ENCODE measurements at regions of chr6 and their contacts with region 1.

Region 1: DNA sequence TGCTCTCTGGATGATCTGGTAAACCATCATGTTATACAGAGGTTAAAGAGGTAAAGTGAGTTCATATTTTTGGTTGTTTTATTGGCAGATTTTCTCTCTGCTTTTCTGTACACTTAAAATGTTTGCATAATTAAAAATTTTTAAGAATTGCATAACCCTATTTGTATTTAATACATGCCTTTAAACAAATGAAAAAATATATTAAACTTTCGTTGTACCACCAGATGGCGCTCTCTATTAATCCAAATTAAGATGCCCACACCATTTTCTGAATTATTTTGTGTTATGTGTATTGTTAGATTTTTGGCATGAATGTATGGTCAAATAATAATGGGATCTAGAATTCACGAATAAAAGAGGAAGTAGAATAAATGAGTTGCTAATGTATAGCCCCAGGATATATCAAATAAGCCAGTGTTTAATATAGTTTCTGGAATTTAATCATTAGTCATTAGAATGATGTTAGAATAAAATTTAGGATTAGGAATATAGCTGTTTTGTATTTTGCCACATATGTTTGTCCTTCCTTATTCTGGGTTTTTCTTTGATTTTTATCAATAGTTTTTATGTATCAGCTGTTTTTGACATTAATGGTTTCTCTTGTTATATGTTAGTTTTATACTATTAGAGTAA is 38.9 kb downstream of the SMAP1 start:
- DNase-seq: peak in 1 of 2 donors; percentile 74
- ATAC-seq: peak in 1 of 3 donors; percentile 39
- H3K4me3 ChIP-seq: no peak overlapping the region
- H3K4me3 Mint-ChIP-seq: no peak overlapping the region
- H3K27ac ChIP-seq: no peak overlapping the region
- H3K27ac Mint-ChIP-seq: no peak overlapping the region
- H3K4me1 ChIP-seq: no peaks in the 10 kb centered on the region
- H3K4me1 Mint-ChIP-seq: peaks cover 42 to 54% of the 10 kb centered on the region in 2 donors
- H3K27me3 ChIP-seq: no peaks in the 10 kb centered on the region
- H3K27me3 Mint-ChIP-seq: no peaks in the 10 kb centered on the region
- CTCF ChIP-seq: peak; percentile 86

Region 2: DNA sequence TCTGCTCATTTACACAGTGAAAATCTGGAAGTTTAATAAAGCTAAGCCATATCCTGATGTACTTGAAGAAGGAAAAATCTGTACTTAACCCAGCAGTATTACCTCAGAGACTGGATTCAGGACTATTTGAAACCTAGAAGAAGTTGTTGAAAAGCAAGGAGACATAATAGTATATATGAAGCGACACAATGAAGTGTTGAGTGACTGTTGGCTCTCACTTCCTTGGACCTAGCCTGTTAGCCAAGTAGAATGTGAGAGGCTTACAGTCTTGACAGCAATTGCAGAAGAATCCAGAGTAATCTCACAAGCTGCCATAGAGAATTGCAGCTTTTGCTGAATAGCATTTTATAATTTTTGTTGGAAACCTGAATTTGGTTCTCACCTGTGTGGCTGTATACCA is 12.2 kb before region 1 on chr6:
- intact Hi-C with region 1: no loop called
- DNase-seq: no peak
- ATAC-seq: no peak
- H3K4me3 ChIP-seq: no peak overlapping the region
- H3K4me3 Mint-ChIP-seq: no peak overlapping the region
- H3K27ac ChIP-seq: no peak overlapping the region
- H3K27ac Mint-ChIP-seq: no peak overlapping the region
- H3K4me1 ChIP-seq: peaks cover 3% of the 10 kb centered on the region
- H3K4me1 Mint-ChIP-seq: peaks cover 87 to 88% of the 10 kb centered on the region in 2 donors
- H3K27me3 ChIP-seq: no peaks in the 10 kb centered on the region
- H3K27me3 Mint-ChIP-seq: no peaks in the 10 kb centered on the region
- CTCF ChIP-seq: no peak

Region 3: DNA sequence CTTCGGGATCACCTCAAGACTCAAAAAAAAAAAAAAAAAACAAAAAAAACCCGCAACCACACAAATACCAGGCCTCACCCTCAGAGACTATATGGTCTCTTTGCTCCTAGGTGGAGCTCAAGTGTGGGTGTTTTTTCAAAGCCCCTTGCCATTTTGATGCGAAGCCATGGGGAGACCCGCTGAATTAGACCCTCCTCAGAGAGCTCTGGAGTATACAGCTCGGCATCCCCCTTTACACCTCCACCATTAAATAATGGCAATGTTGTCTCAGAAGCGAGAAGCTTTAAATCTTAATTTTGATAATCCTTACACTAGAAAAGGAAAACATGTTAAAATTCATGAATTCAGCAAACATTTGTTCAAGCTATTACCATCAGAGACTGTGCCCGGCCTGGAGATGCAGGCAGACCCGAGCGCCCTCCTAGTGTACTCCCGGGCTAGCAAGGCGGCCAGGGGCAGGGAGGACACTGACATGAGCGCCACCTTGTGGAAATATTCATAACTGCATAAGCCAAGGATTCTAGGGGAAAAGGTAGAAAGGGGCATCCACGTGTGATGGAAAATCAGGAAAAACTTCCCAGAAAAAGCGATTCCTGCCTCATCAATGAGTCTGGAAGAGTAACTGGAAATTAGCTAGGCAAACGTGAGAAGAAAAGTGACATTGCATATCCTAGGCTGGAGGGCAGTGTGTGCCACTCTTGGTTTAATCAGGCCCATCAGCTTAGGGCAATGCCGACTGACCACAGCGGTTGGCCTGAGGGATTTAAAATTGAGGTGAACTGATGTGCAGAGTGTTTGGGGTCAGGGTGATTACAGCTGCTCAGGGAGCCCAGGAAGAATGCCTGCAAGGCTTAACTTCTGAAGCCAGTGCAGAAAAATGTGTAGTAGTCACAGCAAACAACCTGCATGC is 177.7 kb after region 1 on chr6:
- intact Hi-C with region 1: loop called (anchors 1 kb)
- DNase-seq: peak; percentile 32 to 76
- ATAC-seq: peak; percentile 75 to 92 (median 87)
- H3K4me3 ChIP-seq: no peak overlapping the region
- H3K4me3 Mint-ChIP-seq: no peak overlapping the region
- H3K27ac ChIP-seq: no peak overlapping the region
- H3K27ac Mint-ChIP-seq: no peak overlapping the region
- H3K4me1 ChIP-seq: no peaks in the 10 kb centered on the region
- H3K4me1 Mint-ChIP-seq: no peaks in the 10 kb centered on the region
- H3K27me3 ChIP-seq: no peaks in the 10 kb centered on the region
- H3K27me3 Mint-ChIP-seq: peaks cover 16 to 32% of the 10 kb centered on the region in 2 donors
- CTCF ChIP-seq: peak; percentile 86

Region 4: GRCh38 chr6:70905742-70906141 is 199.1 kb after region 1 on chr6:
- intact Hi-C with region 1: no loop called
- DNase-seq: no peak
- ATAC-seq: no peak
- H3K4me3 ChIP-seq: no peak overlapping the region
- H3K4me3 Mint-ChIP-seq: no peak overlapping the region
- H3K27ac ChIP-seq: no peak overlapping the region
- H3K27ac Mint-ChIP-seq: no peak overlapping the region
- H3K4me1 ChIP-seq: no peaks in the 10 kb centered on the region
- H3K4me1 Mint-ChIP-seq: no peaks in the 10 kb centered on the region
- H3K27me3 ChIP-seq: no peaks in the 10 kb centered on the region
- H3K27me3 Mint-ChIP-seq: peaks cover 0 to 21% of the 10 kb centered on the region in 2 donors
- CTCF ChIP-seq: no peak

Region 5: GRCh38 chr6:70955441-70956190 is 249.0 kb after region 1 on chr6:
- intact Hi-C with region 1: loop called (anchors 5 kb)
- DNase-seq: peak; percentile 71 to 90
- ATAC-seq: peak; percentile 88 to 96 (median 94)
- H3K4me3 ChIP-seq: peak overlapping the region; percentile 13
- H3K4me3 Mint-ChIP-seq: peak overlapping the region; percentile 87
- H3K27ac ChIP-seq: no peak overlapping the region
- H3K27ac Mint-ChIP-seq: no peak overlapping the region
- H3K4me1 ChIP-seq: peaks cover 21% of the 10 kb centered on the region
- H3K4me1 Mint-ChIP-seq: peaks cover 11 to 16% of the 10 kb centered on the region in 2 donors
- H3K27me3 ChIP-seq: peaks cover 25% of the 10 kb centered on the region
- H3K27me3 Mint-ChIP-seq: peaks cover 47 to 53% of the 10 kb centered on the region in 2 donors
- CTCF ChIP-seq: peak; percentile 69

Region 6: DNA sequence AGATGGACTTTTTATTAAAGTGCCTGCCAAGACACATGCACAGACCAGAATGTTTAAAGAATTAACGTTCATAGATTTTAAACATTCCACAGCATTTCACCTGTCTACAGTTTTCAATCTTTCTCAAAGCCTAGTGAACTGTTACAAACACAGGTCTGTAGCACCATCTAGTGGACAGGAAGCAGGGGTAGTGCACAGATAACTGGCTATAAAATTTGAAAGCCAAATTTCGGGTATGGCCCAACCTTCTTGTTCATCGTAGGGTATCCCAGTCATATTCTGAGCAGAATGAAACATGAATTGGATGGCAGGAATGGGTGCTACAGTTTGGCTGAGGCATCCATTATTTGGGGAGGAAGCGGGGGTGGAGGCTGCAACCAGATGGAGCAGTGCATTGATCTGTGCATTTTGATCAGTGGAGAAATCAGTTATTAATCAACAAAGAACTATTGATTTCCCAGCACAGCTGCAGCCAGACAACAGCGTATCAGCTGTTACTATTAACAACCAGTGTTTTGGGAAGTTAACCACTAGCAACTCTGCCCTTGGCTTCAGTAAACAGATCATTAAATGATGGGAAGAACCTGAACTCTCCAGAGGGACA is 306.4 kb after region 1 on chr6:
- intact Hi-C with region 1: loop called (anchors 2 kb)
- DNase-seq: peak in 1 of 2 donors; percentile 70
- ATAC-seq: peak in 1 of 3 donors; percentile 66
- H3K4me3 ChIP-seq: no peak overlapping the region
- H3K4me3 Mint-ChIP-seq: no peak overlapping the region
- H3K27ac ChIP-seq: no peak overlapping the region
- H3K27ac Mint-ChIP-seq: no peak overlapping the region
- H3K4me1 ChIP-seq: no peaks in the 10 kb centered on the region
- H3K4me1 Mint-ChIP-seq: no peaks in the 10 kb centered on the region
- H3K27me3 ChIP-seq: no peaks in the 10 kb centered on the region
- H3K27me3 Mint-ChIP-seq: peaks cover 5 to 8% of the 10 kb centered on the region in 2 donors
- CTCF ChIP-seq: peak; percentile 48

Measured in natural killer cell (primary cell).